A549 (cell line): ENCODE measurements at regions of chr17 and their contacts with region 1.

Region 1: DNA sequence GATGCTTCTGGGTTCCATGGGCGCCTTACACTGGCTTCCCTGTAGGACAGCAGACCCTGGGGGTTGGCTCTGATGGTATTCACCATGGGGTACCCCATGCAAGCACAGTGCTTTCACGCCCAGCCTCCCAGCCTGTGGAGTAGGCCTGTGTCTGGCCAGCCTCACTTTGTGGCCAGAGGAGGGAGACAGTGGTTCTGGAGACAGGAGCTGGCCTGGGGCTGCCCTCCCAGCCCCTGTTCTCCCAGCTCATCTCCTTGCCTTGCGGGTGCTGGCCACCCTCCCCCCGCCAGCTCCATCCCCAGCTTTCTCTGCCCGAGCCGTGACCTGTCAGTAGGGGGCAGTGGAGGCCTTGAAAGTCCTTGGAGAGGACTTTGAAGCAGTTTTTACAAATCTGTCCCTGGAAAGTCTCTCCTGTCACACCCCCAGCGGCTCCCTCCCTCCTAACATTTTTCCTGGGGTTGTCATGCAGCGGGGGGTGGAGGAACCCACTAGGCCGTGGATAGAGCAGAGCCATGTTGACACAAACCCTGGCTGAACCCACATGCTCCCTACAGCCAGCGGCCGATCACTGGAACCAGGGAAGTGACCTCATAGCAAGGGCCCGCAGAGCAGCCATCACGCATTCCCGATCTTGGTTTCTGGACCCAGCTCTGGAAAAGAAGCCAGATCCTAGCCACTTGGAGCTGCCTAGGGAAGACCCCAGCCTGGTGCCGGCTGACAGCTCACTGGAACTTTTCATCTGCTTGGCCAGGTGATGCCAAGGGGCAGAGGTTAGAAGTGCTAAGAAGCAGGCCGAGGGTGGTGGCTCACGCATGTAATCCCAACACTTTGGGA is 289.4 kb downstream of the SEC14L1 start:
- DNase-seq: peak; percentile 84 to 88
- ATAC-seq: peak; percentile 28 to 58
- H3K4me3 ChIP-seq: no peak overlapping the region
- H3K27ac ChIP-seq: peak overlapping the region; percentile 75 to 95
- H3K4me1 ChIP-seq: peaks cover 60% of the 10 kb centered on the region
- CTCF ChIP-seq: peak; percentile 81
- EP300 ChIP-seq: 0 out of 5 replicates have a peak, but pooled peaks of 1 of the 2 experiments have one; percentile 0
- POLR2A ChIP-seq: no peak
- RAD21 ChIP-seq: peak; percentile 83 to 84

Region 2: DNA sequence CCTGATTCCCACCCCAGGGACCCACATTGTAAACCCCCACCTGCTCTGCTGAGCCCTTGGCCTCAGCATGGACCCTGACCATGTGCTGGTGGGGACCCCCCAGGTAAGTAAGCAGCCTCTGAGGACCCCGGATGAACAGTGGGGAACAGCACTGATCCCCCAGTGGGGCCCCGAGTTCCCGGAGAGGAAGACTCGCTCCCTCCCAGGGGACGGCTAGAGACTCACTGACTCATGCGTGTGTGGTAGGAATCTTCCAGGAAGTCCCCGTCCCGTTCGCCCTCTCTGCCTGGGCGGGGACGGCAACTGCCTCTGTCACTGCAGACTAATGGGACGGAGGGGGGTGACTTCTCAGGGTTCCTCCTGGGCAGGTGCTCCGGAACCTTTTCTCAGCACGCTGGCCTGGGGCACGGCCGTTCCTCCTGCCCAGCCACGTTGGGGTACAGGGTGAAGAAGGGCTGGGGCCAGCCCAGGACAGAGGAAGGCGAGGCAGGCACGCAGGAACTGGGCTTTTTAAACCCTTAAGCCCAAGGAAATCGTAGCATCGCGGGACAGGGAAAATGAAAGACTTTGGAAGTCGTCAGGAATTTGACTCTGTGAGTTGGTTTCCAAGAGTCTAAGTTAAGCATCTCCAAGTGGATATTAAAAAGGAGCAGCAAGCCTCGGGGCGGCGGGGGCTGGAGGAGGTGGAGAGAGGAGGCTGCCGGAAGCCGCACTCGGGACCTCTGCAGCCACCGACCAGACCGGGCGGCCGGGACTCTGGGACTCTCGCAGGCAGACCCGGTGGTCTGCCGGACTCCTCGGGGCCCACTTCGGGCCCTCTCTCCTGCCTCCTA is 110.7 kb before region 1 on chr17:
- CTCF ChIA-PET with region 1: interaction called, 17 read pairs
- POLR2A ChIA-PET with region 1: no interaction called
- DNase-seq: peak; percentile 93 to 95
- ATAC-seq: peak; percentile 69 to 76
- H3K4me3 ChIP-seq: peak overlapping the region; percentile 64
- H3K27ac ChIP-seq: peak overlapping the region; percentile 93 to 98
- H3K4me1 ChIP-seq: peaks cover 81% of the 10 kb centered on the region
- CTCF ChIP-seq: no peak
- EP300 ChIP-seq: 0 out of 5 replicates have a peak, but pooled peaks of 1 of the 2 experiments have one; percentile 30
- POLR2A ChIP-seq: peak; percentile 46; the same call in 1 of the 2 replicates
- RAD21 ChIP-seq: no peak

Region 3: GRCh38 chr17:77400445-77400870 is 29.7 kb before region 1 on chr17:
- CTCF ChIA-PET with region 1: interaction called, 20 read pairs
- POLR2A ChIA-PET with region 1: no interaction called
- DNase-seq: no peak
- ATAC-seq: peak; percentile 62 to 76; a peak in 5 of 6 replicates
- H3K4me3 ChIP-seq: no peak overlapping the region
- H3K27ac ChIP-seq: peak overlapping the region in 1 of 2 experiments; percentile 33; a peak in 3 of 6 replicates
- H3K4me1 ChIP-seq: peaks cover 14% of the 10 kb centered on the region; the same call in 1 of the 3 replicates
- CTCF ChIP-seq: peak; percentile 18; the same call in 2 of the 3 replicates
- EP300 ChIP-seq: no peak
- POLR2A ChIP-seq: no peak
- RAD21 ChIP-seq: peak; percentile 43 to 58; a peak in 3 of 5 replicates

Region 4: DNA sequence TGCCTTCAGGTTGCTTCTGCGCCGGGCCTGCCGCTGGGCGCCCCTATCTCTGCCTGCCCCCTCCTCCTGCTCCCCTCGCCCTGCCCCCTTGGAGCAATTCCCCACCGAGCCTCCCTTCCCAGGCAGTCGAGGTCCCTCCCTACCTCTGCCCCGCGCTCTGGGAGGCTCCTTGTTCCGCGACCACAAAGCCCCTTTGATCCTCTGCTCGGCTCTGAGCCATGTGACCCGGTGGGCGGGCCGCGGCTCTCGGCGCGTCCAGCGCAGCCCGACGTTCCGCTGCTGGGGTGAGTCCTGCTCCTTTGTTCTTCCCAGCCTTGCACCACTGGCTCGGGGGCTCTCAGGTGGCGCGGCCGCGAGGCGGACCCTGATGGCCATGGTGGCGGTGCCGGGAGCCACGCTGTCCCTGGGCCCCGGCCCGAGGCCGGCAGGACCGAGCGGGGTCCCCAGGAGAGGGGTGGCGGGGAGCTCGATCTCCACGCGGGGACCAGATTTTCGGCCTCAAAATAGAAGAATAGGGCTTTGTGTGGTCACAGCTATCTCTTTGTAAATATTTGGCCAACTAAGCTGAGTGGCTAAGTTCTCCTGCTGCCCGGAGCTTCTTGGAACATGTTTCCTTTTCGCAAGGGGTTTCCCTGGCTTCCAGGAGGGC is 21.2 kb after region 1 on chr17:
- CTCF ChIA-PET with region 1: interaction called, 111 read pairs
- POLR2A ChIA-PET with region 1: no interaction called
- DNase-seq: no peak
- ATAC-seq: no peak
- H3K4me3 ChIP-seq: no peak overlapping the region
- H3K27ac ChIP-seq: no peak overlapping the region
- H3K4me1 ChIP-seq: peaks cover 22% of the 10 kb centered on the region
- CTCF ChIP-seq: no peak
- EP300 ChIP-seq: no peak
- POLR2A ChIP-seq: no peak
- RAD21 ChIP-seq: no peak

Region 5: DNA sequence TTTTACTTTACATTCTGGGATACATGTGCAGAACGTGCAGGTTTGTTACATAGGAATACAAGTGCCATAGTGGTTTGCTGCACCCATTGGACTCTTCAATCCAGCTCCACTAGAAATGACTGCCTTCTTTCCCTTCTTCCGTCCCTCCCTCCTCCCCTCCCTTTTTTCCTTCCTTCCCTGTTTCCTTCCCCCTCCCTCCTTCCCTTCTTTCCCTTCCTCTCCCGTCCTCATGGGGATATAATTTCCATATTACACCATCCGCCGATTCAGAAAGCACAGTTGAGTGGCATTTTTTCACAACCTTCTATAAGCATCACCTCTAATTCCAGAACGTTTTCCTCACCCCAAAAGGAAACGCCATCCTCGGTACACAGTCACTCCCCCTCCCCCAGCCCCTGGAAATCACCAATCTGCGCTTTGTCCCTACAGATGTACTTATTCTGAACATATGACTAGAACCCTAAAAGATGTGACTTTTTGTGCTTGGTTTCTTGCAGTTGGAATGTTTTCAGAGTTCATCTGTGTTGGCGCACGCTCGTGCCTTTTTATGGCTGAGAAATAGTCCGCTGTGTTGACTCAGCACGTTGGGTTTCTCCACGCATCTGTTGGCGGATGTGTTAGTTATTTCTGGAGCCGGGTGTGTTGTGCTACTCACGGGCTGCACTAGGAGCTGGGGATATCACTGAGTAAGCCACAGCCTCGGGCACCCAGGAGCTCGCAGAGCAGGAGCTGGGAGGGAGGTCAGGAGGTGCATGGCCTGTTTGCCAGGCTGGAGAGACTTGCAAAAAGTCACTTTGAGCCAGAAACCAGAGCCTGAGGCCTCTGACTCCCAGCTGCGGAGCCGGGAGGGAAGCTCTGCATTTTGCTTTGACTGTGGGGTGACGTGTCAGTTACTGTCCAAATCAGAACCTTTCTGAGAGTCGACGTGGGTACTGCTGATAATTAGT is 47.1 kb after region 1 on chr17:
- CTCF ChIA-PET with region 1: interaction called, 10 read pairs
- POLR2A ChIA-PET with region 1: no interaction called
- DNase-seq: no peak
- ATAC-seq: no peak
- H3K4me3 ChIP-seq: no peak overlapping the region
- H3K27ac ChIP-seq: no peak overlapping the region
- H3K4me1 ChIP-seq: peaks cover 46% of the 10 kb centered on the region
- CTCF ChIP-seq: no peak
- EP300 ChIP-seq: no peak
- POLR2A ChIP-seq: no peak
- RAD21 ChIP-seq: no peak

Region 6: DNA sequence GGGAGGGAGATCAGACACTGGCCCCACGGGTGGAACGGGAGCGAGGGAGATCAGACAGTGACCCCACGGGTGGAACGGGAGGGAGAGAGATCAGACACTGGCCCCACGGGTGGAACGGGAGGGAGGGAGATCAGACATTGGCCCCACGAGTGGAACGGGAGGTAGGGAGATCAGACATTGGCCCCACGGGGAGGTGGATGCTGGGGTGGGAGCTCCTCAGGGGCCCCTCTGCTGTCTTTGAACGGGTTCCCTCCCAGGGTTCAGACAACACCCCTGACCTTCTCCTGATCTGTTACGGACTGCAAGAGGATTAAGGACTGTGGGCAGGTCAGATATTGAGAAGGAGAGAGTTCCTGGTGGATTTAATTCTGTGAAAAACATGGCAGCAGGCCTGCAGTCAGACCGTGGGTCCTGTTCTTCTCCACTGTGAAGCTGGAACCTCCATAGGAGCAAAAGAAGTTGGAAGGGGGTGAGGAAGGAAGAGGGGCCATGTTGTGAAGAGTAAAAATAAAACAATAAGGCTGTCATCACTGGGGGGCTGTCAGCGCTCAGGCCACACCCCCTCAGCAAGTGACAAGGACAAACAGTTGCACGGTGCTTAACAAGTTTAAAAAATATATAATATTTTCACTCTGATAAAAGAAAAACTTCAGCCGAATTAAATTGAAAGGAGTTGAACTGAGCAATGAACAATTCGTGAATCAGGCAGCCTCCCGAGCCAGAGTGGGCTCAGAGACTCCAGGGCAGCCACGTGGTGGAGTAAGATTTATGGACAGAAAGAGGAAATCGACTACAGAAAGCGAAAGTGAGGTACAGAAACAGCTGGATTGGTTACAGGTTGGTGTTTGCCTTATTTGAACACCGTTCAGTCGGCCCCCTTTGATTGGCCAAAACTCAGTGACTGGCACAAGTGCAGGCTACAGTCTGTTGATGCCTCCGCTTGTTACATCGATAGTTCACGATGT is 179.7 kb after region 1 on chr17:
- CTCF ChIA-PET with region 1: no interaction called
- POLR2A ChIA-PET with region 1: no interaction called
- DNase-seq: no peak
- ATAC-seq: no peak
- H3K4me3 ChIP-seq: no peak overlapping the region
- H3K27ac ChIP-seq: peak overlapping the region in 1 of 2 experiments; percentile 11; a peak in 1 of 6 replicates
- H3K4me1 ChIP-seq: peaks cover 3% of the 10 kb centered on the region
- CTCF ChIP-seq: no peak
- EP300 ChIP-seq: no peak
- POLR2A ChIP-seq: no peak
- RAD21 ChIP-seq: no peak